PC-3 (cell line): ENCODE measurements at regions of chr13 and their contacts with region 1.

Region 1: DNA sequence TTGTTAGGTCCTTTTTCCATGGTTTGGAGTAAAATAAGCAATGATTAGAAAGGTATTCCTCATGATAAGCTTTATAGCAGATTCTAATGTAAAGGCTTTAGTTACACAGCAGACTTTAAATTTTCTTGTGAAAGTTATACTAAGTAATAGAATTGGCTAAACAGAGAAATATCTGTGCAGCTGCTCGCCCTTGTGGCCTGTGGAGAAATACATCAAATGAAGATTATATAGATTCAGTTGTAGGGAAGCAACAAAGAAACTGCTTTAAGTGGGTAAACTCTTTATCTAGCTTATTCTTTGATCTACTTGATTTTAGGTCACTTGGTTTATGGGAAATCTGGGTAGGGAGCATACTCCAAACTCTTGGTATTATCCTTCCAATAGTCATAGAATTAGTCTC is 1269.7 kb upstream of the SPRY2 start:
- DNase-seq: no peak
- ATAC-seq: 0 out of 2 replicates have a peak, but pooled peaks have one; percentile 24
- H3K4me3 ChIP-seq: no peak overlapping the region
- H3K27ac ChIP-seq: no peak overlapping the region
- H3K4me1 ChIP-seq: no peaks in the 10 kb centered on the region
- H3K27me3 ChIP-seq: no peaks in the 10 kb centered on the region
- CTCF ChIP-seq: no peak

Region 2: GRCh38 chr13:81058916-81059290 is 551.7 kb before region 1 on chr13:
- CTCF ChIA-PET with region 1: no interaction called
- POLR2A ChIA-PET with region 1: no interaction called
- intact Hi-C with region 1: loop called (anchors 1 kb)
- DNase-seq: peak; percentile 49
- ATAC-seq: peak; percentile 87
- H3K4me3 ChIP-seq: no peak overlapping the region
- H3K27ac ChIP-seq: 0 out of 2 replicates have a peak overlapping the region, but pooled peaks have one; percentile 6
- H3K4me1 ChIP-seq: peaks cover 18% of the 10 kb centered on the region
- H3K27me3 ChIP-seq: no peaks in the 10 kb centered on the region
- CTCF ChIP-seq: no peak

Region 3: GRCh38 chr13:81171065-81171647 is 439.5 kb before region 1 on chr13:
- CTCF ChIA-PET with region 1: interaction called, 3 read pairs
- POLR2A ChIA-PET with region 1: no interaction called
- intact Hi-C with region 1: loop called (anchors 5 kb)
- DNase-seq: peak; percentile 54
- ATAC-seq: peak; percentile 42; the same call in 1 of the 2 replicates
- H3K4me3 ChIP-seq: no peak overlapping the region
- H3K27ac ChIP-seq: no peak overlapping the region
- H3K4me1 ChIP-seq: no peaks in the 10 kb centered on the region
- H3K27me3 ChIP-seq: no peaks in the 10 kb centered on the region
- CTCF ChIP-seq: peak; percentile 67

Region 4: GRCh38 chr13:81487151-81487550 is 123.5 kb before region 1 on chr13:
- CTCF ChIA-PET with region 1: no interaction called
- POLR2A ChIA-PET with region 1: no interaction called
- intact Hi-C with region 1: loop called (anchors 1 kb)
- DNase-seq: peak; percentile 61
- ATAC-seq: peak; percentile 77
- H3K4me3 ChIP-seq: no peak overlapping the region
- H3K27ac ChIP-seq: no peak overlapping the region
- H3K4me1 ChIP-seq: no peaks in the 10 kb centered on the region
- H3K27me3 ChIP-seq: no peaks in the 10 kb centered on the region
- CTCF ChIP-seq: peak; percentile 55

Region 5: DNA sequence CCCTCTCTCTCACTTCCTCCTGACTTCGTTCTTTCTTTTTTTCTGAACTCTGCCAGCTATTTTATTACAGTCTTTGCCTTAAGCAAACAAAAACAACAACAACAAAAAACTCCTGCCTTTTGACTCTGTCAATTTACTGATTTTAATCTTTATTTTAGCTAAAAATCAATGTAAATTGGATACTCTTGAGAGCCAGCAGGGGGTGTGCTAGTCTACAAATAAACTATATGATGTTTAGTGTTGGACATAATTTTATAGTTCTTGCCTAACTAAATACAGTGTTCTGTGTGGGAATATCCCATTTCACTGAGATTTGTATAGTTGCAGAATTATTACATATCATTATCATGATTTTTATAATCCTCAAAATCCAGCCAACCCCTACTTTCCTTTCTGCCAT is 69.9 kb before region 1 on chr13:
- CTCF ChIA-PET with region 1: no interaction called
- POLR2A ChIA-PET with region 1: no interaction called
- intact Hi-C with region 1: loop called (anchors 2 kb)
- DNase-seq: peak; percentile 3
- ATAC-seq: no peak
- H3K4me3 ChIP-seq: no peak overlapping the region
- H3K27ac ChIP-seq: no peak overlapping the region
- H3K4me1 ChIP-seq: no peaks in the 10 kb centered on the region
- H3K27me3 ChIP-seq: no peaks in the 10 kb centered on the region
- CTCF ChIP-seq: peak; percentile 61